Right ventricle myocardium inferior (tissue), 1 donor: ENCODE measurements at regions of chr20 and their contacts with region 1.

Region 1: GRCh38 chr20:57596998-57597939 is 23.0 kb downstream of the ZBP1 start:
- DNase-seq: peak; percentile 89
- ATAC-seq: peak; percentile 82

Region 2: GRCh38 chr20:57374931-57375651 is 222.2 kb before region 1 on chr20:
- intact Hi-C with region 1: loop called (anchors 10 kb)
- DNase-seq: peak; percentile 83
- ATAC-seq: peak; percentile 75

Region 3: DNA sequence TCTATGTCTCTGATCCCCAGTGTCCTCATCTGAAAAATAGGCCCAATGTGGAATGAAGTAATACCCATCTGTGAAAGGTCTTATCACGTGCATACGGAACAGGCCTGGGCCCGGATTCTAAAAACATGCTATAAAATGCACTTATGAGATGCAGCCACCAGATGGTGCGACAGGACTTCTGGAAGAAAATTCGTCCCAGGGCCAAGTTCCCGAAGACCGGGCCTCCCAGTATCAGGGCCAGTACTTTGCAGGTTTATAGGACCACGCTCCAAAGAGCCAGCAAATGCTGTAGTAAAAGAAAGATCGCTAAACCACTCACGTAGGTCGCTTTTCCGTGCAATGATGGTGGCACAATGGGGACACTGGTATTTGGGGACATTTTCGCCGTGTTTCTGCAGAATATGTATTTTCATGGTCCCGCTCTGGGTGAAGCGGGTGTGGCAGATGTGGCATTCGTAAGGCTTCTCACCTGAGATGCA is 83.0 kb before region 1 on chr20:
- intact Hi-C with region 1: loop called (anchors 1 kb)
- DNase-seq: no peak
- ATAC-seq: peak; percentile 80

Region 4: GRCh38 chr20:58087193-58087858 is 490.1 kb after region 1 on chr20:
- intact Hi-C with region 1: loop called (anchors 5 kb)
- DNase-seq: no peak
- ATAC-seq: no peak

Region 5: GRCh38 chr20:58179432-58180099 is 582.3 kb after region 1 on chr20:
- intact Hi-C with region 1: loop called (anchors 10 kb)
- DNase-seq: peak; percentile 77
- ATAC-seq: peak; percentile 74

Region 6: GRCh38 chr20:58209652-58210397 is 612.6 kb after region 1 on chr20:
- intact Hi-C with region 1: loop called (anchors 1 kb)
- DNase-seq: peak; percentile 94
- ATAC-seq: peak; percentile 88